ENCODE measurements at regions of chr3 and their contacts with region 1.

Region 1: DNA sequence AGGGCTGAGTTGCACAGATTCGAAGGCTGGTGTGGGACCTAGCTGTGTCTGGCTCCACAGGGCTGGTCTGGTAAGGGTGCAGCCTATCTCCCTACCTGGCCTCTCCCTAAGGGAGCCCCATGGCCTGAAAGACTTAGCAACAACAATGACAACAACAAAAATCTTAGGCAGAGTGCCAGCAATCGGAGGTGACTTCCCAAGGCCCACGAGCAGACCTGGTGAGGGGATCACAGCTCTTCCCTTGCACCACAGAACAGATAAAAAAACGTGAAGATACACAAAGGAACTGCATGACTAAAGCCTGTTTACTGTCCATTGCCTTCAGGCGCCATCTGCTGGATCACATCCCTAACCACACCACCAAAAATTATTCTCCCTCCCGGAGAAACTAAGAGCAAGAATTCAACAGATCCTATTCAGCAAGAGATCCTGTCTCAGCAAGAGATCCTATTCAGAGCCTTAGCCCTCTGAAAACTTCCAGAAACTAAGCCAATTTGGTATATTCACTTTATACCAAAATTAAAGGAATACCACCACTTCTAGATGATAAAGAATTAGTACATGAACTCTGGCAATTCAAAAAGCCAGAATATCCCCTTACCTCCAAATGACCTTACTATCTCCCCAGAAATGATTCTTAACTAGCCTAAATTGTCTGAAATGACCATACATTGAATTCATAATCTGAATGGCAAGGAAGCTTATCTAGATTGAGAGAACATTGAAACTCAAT is 24.1 kb upstream of the OR5K4 start:
- DNase-seq: peak; percentile 27
- ATAC-seq: peak; percentile 75
- H3K4me3 ChIP-seq: no peak overlapping the region
- H3K27ac ChIP-seq: no peak overlapping the region
- H3K4me1 ChIP-seq: peaks cover 5% of the 10 kb centered on the region
- H3K27me3 ChIP-seq: no peaks in the 10 kb centered on the region
- CTCF ChIP-seq: peak; percentile 78 to 92 (median 80)
- EP300 ChIP-seq: no peak
- POLR2A ChIP-seq: no peak
- RAD21 ChIP-seq: peak; percentile 89

Region 2: GRCh38 chr3:97793420-97794019 is 536.0 kb before region 1 on chr3:
- CTCF ChIA-PET with region 1: no interaction called
- POLR2A ChIA-PET with region 1: no interaction called
- RAD21 ChIA-PET with region 1: no interaction called
- SMC1A ChIA-PET with region 1: no interaction called
- in situ Hi-C with region 1: loop called (anchors 10 kb)
- intact Hi-C with region 1: loop called (anchors 10 kb)
- DNase-seq: peak; percentile 4
- ATAC-seq: peak; percentile 74
- H3K4me3 ChIP-seq: no peak overlapping the region
- H3K27ac ChIP-seq: no peak overlapping the region
- H3K4me1 ChIP-seq: no peaks in the 10 kb centered on the region
- H3K27me3 ChIP-seq: no peaks in the 10 kb centered on the region
- CTCF ChIP-seq: peak; percentile 57 to 80 (median 68); a peak in 4 of 6 replicates
- EP300 ChIP-seq: no peak
- POLR2A ChIP-seq: no peak
- RAD21 ChIP-seq: peak; percentile 90

Region 3: DNA sequence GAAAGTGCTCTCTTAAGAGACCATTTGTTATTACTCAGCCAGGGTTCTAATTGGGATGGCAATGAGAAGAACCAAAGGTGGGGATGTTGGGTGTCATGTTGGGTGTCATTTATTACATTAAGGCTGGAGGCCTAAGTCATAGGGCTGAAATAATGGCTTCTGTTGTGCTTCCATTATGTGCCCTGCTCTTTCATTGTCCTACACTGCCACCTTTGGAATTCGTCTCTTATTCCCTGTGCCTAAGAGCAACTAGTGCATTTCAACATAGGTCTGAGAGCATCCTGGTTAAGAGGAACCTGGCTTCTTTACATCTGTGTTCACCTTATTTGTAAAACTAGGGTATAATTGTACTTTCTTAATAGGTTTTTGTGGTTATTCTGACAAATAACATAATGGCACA is 389.5 kb before region 1 on chr3:
- CTCF ChIA-PET with region 1: no interaction called
- POLR2A ChIA-PET with region 1: no interaction called
- RAD21 ChIA-PET with region 1: no interaction called
- SMC1A ChIA-PET with region 1: no interaction called
- in situ Hi-C with region 1: no loop called
- intact Hi-C with region 1: no loop called
- DNase-seq: no peak
- ATAC-seq: no peak
- H3K4me3 ChIP-seq: no peak overlapping the region
- H3K27ac ChIP-seq: no peak overlapping the region
- H3K4me1 ChIP-seq: no peaks in the 10 kb centered on the region
- H3K27me3 ChIP-seq: no peaks in the 10 kb centered on the region
- CTCF ChIP-seq: peak in 1 of 3 experiments; percentile 7; a peak in 1 of 6 replicates
- EP300 ChIP-seq: no peak
- POLR2A ChIP-seq: no peak
- RAD21 ChIP-seq: no peak

Region 4: GRCh38 chr3:98039322-98040024 is 290.1 kb before region 1 on chr3:
- CTCF ChIA-PET with region 1: interaction called, 112 read pairs
- POLR2A ChIA-PET with region 1: no interaction called
- RAD21 ChIA-PET with region 1: interaction called, 19 read pairs
- SMC1A ChIA-PET with region 1: interaction called, 41 read pairs
- in situ Hi-C with region 1: loop called (anchors 5 kb)
- intact Hi-C with region 1: loop called (anchors 1 kb)
- DNase-seq: peak; percentile 79
- ATAC-seq: peak; percentile 97
- H3K4me3 ChIP-seq: peak overlapping the region; percentile 66; the same call in 1 of the 2 replicates
- H3K27ac ChIP-seq: no peak overlapping the region
- H3K4me1 ChIP-seq: no peaks in the 10 kb centered on the region
- H3K27me3 ChIP-seq: no peaks in the 10 kb centered on the region; a peak in 1 of 4 replicates
- CTCF ChIP-seq: peak; percentile 61 to 95 (median 67)
- EP300 ChIP-seq: no peak
- POLR2A ChIP-seq: no peak
- RAD21 ChIP-seq: peak; percentile 86

Region 5: GRCh38 chr3:98095870-98096269 is 233.7 kb before region 1 on chr3:
- CTCF ChIA-PET with region 1: no interaction called
- POLR2A ChIA-PET with region 1: no interaction called
- RAD21 ChIA-PET with region 1: no interaction called
- SMC1A ChIA-PET with region 1: no interaction called
- in situ Hi-C with region 1: no loop called
- intact Hi-C with region 1: no loop called
- DNase-seq: no peak
- ATAC-seq: no peak
- H3K4me3 ChIP-seq: no peak overlapping the region
- H3K27ac ChIP-seq: no peak overlapping the region
- H3K4me1 ChIP-seq: no peaks in the 10 kb centered on the region
- H3K27me3 ChIP-seq: no peaks in the 10 kb centered on the region
- CTCF ChIP-seq: no peak
- EP300 ChIP-seq: no peak
- POLR2A ChIP-seq: no peak
- RAD21 ChIP-seq: no peak

Region 6: GRCh38 chr3:98188545-98188944 is 141.0 kb before region 1 on chr3:
- CTCF ChIA-PET with region 1: interaction called, 64 read pairs
- POLR2A ChIA-PET with region 1: no interaction called
- RAD21 ChIA-PET with region 1: interaction called, 28 read pairs
- SMC1A ChIA-PET with region 1: interaction called, 24 read pairs
- in situ Hi-C with region 1: loop called (anchors 5 kb)
- intact Hi-C with region 1: loop called (anchors 1 kb)
- DNase-seq: peak; percentile 53
- ATAC-seq: peak; percentile 99
- H3K4me3 ChIP-seq: no peak overlapping the region
- H3K27ac ChIP-seq: no peak overlapping the region
- H3K4me1 ChIP-seq: no peaks in the 10 kb centered on the region
- H3K27me3 ChIP-seq: no peaks in the 10 kb centered on the region; a peak in 1 of 4 replicates
- CTCF ChIP-seq: peak; percentile 55 to 68 (median 68)
- EP300 ChIP-seq: no peak
- POLR2A ChIP-seq: no peak
- RAD21 ChIP-seq: peak; percentile 66

Region 7: GRCh38 chr3:98233468-98233867 is 96.1 kb before region 1 on chr3:
- CTCF ChIA-PET with region 1: interaction called, 5 read pairs
- POLR2A ChIA-PET with region 1: no interaction called
- RAD21 ChIA-PET with region 1: no interaction called
- SMC1A ChIA-PET with region 1: interaction called, 5 read pairs
- in situ Hi-C with region 1: no loop called
- intact Hi-C with region 1: loop called (anchors 5 kb)
- DNase-seq: peak; percentile 72
- ATAC-seq: peak; percentile 86
- H3K4me3 ChIP-seq: no peak overlapping the region
- H3K27ac ChIP-seq: no peak overlapping the region
- H3K4me1 ChIP-seq: no peaks in the 10 kb centered on the region
- H3K27me3 ChIP-seq: no peaks in the 10 kb centered on the region
- CTCF ChIP-seq: no peak
- EP300 ChIP-seq: no peak
- POLR2A ChIP-seq: no peak
- RAD21 ChIP-seq: no peak

Region 8: DNA sequence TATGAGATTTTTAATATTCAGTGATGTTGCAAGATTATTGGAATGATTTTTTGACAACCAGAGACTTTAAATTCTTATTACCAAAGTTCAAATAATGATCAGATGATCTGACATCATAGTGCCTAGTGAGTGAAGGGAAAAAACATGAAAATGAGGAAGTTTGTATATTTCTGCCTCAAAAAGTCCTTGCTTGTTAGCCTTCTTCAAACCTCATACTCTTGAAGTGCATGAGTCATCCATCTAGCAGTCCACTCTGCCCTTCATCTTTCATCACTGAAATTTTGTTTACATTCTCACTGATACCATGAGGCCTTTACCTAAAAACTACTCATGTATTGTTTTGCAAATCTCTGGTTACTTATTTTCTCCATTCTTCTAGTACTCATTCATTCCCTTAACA is 89.4 kb before region 1 on chr3:
- CTCF ChIA-PET with region 1: interaction called, 3 read pairs
- POLR2A ChIA-PET with region 1: no interaction called
- RAD21 ChIA-PET with region 1: no interaction called
- SMC1A ChIA-PET with region 1: interaction called, 13 read pairs
- in situ Hi-C with region 1: no loop called
- intact Hi-C with region 1: no loop called
- DNase-seq: no peak
- ATAC-seq: peak; percentile 85
- H3K4me3 ChIP-seq: no peak overlapping the region
- H3K27ac ChIP-seq: no peak overlapping the region
- H3K4me1 ChIP-seq: no peaks in the 10 kb centered on the region; the same call in 1 of the 2 replicates
- H3K27me3 ChIP-seq: no peaks in the 10 kb centered on the region
- CTCF ChIP-seq: no peak
- EP300 ChIP-seq: no peak
- POLR2A ChIP-seq: no peak
- RAD21 ChIP-seq: no peak

Region 9: GRCh38 chr3:98343647-98344507 is 14.3 kb after region 1 on chr3:
- CTCF ChIA-PET with region 1: interaction called, 26 read pairs
- POLR2A ChIA-PET with region 1: no interaction called
- RAD21 ChIA-PET with region 1: interaction called, 5 read pairs
- SMC1A ChIA-PET with region 1: interaction called, 9 read pairs
- in situ Hi-C with region 1: no loop called
- intact Hi-C with region 1: no loop called
- DNase-seq: no peak
- ATAC-seq: peak; percentile 92
- H3K4me3 ChIP-seq: no peak overlapping the region
- H3K27ac ChIP-seq: no peak overlapping the region
- H3K4me1 ChIP-seq: no peaks in the 10 kb centered on the region
- H3K27me3 ChIP-seq: no peaks in the 10 kb centered on the region
- CTCF ChIP-seq: peak; percentile 70 to 84 (median 80)
- EP300 ChIP-seq: no peak
- POLR2A ChIP-seq: no peak
- RAD21 ChIP-seq: peak; percentile 67

Measured in GM12878 (cell line).